A549 (cell line): ENCODE measurements at regions of chr2 and their contacts with region 1.

Region 1: DNA sequence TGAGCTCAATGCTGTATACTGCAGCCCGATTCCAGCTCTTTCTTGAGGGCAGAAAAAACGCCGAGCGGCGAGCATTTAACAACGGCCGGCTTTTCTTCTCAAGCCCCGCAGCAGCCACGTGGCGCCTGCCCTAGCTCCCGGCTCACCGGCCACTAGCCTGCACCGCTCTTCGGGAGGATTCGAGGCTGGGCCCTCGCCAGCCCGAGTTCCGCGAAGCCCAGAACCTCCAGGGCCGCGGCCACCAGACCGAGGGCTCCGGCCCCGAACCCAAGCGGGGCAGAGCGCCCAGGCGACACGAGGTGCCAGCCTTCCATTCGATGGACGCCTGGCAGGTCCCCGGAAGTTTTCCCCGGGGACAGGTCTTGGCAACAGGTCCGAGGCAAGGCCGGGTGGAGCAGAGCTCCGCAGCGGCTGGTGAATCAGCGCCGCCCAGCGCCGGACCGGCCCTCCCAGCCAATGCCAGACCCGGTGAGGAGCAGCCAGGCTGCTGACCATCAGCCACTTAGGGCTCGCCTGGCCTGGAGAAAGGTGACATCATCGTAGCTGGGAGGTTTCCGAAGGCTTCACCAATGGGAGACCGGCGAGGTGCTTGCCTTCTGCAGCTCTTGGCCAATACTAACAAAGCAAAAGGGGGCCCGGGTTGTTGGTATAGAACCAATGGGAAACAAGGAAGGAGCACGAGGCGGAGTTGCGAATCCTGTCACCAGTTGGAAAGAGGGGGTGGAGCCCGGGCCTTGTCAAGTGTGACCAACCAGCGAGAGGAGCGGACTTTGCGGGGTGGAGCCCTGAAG is 544 bp upstream of the MXD1 start:
- DNase-seq: peak; percentile 99 to 100
- ATAC-seq: peak; percentile 94 to 95
- H3K4me3 ChIP-seq: peak overlapping the region; percentile 57
- H3K27ac ChIP-seq: peak overlapping the region; percentile 86 to 95
- H3K4me1 ChIP-seq: peaks cover 17% of the 10 kb centered on the region; the same call in 2 of the 3 replicates
- CTCF ChIP-seq: peak; percentile 42
- EP300 ChIP-seq: no peak
- POLR2A ChIP-seq: peak; percentile 88
- RAD21 ChIP-seq: peak; percentile 50 to 71

Region 2: DNA sequence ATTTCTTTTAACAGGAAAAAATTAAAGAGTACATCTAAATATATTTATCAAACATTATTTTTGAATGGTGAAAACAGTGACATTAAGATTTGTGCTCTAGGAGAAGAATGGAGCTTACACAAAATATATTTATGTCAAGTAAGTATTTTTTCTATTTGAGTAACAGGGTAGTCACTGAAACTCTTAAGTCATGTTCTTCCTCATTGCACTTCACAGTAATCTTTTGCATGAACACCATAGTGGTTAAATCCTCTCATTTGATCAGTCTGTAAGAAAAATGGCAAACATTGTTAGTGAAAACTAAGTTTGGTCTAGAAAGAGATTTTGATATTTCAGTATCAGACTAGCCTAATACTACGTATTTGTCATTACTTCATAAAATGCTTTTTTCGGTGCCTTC is 76.8 kb before region 1 on chr2:
- CTCF ChIA-PET with region 1: no interaction called
- POLR2A ChIA-PET with region 1: no interaction called
- DNase-seq: no peak
- ATAC-seq: no peak
- H3K4me3 ChIP-seq: no peak overlapping the region
- H3K27ac ChIP-seq: no peak overlapping the region
- H3K4me1 ChIP-seq: no peaks in the 10 kb centered on the region
- CTCF ChIP-seq: no peak
- EP300 ChIP-seq: no peak
- POLR2A ChIP-seq: no peak
- RAD21 ChIP-seq: no peak

Region 3: DNA sequence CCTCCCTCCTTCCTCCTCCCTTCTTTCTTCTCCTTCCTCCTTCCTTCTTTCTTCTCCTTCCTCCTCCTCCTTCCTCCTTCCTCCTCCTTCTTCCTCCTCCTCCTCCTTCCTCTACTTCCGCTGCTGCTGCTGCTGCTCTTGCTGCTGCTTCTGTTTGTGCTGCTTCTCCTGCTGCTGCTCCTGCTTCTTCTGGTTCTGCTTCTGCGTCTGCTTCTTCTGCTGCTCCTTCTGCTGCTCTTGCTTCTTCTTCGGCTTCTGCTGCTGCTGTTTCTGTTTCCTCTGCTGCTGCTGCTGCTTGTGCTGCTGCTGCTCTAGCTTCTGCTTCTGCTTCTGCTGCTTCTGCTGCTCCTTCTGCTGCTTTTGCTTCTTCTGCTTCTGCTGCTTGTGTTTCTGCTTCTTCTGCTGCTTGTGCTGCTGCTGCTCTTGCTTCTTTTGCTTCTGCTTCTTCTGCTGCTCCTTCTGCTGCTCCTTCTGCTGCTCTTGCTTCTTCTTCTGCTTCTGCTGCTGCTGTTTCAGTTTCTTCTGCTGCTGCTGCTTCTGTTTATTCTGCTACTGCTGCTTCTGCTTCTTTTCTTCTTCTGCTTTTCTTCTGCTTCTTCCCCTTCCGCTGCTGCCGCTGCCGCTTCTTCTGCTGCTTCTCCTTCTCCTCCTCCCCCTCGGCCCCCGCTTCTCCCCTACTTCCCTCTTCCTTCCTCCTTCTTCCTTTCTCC is 12.0 kb before region 1 on chr2:
- CTCF ChIA-PET with region 1: interaction called, 10 read pairs
- POLR2A ChIA-PET with region 1: interaction called, 4 read pairs
- DNase-seq: no peak
- ATAC-seq: no peak
- H3K4me3 ChIP-seq: no peak overlapping the region
- H3K27ac ChIP-seq: no peak overlapping the region
- H3K4me1 ChIP-seq: no peaks in the 10 kb centered on the region
- CTCF ChIP-seq: no peak
- EP300 ChIP-seq: no peak
- POLR2A ChIP-seq: no peak
- RAD21 ChIP-seq: no peak

Region 4: GRCh38 chr2:70043252-70043875 is 129.0 kb after region 1 on chr2:
- CTCF ChIA-PET with region 1: interaction called, 14 read pairs
- POLR2A ChIA-PET with region 1: interaction called, 7 read pairs
- DNase-seq: no peak
- ATAC-seq: no peak
- H3K4me3 ChIP-seq: no peak overlapping the region
- H3K27ac ChIP-seq: no peak overlapping the region
- H3K4me1 ChIP-seq: no peaks in the 10 kb centered on the region
- CTCF ChIP-seq: no peak
- EP300 ChIP-seq: no peak
- POLR2A ChIP-seq: no peak
- RAD21 ChIP-seq: no peak

Region 5: GRCh38 chr2:70078384-70078783 is 164.0 kb after region 1 on chr2:
- CTCF ChIA-PET with region 1: interaction called, 161 read pairs
- POLR2A ChIA-PET with region 1: interaction called, 11 read pairs
- DNase-seq: no peak
- ATAC-seq: no peak
- H3K4me3 ChIP-seq: no peak overlapping the region
- H3K27ac ChIP-seq: no peak overlapping the region
- H3K4me1 ChIP-seq: peaks cover 4% of the 10 kb centered on the region
- CTCF ChIP-seq: no peak
- EP300 ChIP-seq: no peak
- POLR2A ChIP-seq: no peak
- RAD21 ChIP-seq: no peak

Region 6: DNA sequence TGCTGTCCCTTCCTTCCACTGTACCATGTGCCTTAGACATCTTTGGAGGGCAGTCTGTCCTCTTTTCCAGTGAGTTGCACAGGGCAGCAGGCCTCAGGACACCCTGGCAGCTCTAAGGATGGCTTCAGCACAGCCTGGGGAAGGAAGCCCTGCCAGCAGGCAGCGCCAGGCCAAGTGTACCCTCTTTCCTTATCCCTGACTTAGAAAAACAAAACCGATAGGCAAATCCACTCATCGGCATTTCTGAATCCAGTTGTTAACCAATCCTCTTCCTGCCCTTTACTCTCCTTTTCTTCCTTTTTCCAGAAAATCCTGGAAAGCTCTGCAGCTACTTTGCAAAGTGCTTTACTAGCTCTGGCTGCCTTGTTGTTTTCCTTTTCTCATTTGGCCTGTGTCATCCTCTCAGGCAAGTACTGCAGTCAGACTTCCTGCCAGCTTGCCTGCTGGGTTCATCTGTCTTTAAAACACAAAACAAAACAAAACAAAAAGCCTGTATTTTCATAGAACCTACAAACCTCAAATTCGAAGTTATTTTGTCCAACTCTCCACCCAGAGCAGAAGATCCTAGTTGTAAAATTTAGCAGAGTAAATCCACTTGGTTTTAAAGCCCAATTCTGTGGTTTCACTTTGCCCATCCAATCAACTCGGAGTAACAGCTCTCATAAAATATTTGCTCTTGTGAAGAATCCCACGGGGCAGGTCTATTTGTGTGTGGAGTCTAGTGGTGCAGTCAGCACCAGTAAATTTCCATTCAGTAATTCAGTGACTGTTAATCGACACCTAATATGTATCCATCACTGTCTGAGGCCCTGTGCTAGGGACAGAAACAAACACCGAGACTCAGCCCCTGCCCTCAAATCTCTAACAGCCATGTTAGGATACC is 218.1 kb after region 1 on chr2:
- CTCF ChIA-PET with region 1: interaction called, 12 read pairs
- POLR2A ChIA-PET with region 1: interaction called, 25 read pairs
- DNase-seq: peak; percentile 53 to 68
- ATAC-seq: peak; percentile 63 to 66
- H3K4me3 ChIP-seq: peak overlapping the region; percentile 20
- H3K27ac ChIP-seq: peak overlapping the region; percentile 90
- H3K4me1 ChIP-seq: peaks cover 51% of the 10 kb centered on the region
- CTCF ChIP-seq: no peak
- EP300 ChIP-seq: no peak
- POLR2A ChIP-seq: no peak
- RAD21 ChIP-seq: no peak

Region 7: DNA sequence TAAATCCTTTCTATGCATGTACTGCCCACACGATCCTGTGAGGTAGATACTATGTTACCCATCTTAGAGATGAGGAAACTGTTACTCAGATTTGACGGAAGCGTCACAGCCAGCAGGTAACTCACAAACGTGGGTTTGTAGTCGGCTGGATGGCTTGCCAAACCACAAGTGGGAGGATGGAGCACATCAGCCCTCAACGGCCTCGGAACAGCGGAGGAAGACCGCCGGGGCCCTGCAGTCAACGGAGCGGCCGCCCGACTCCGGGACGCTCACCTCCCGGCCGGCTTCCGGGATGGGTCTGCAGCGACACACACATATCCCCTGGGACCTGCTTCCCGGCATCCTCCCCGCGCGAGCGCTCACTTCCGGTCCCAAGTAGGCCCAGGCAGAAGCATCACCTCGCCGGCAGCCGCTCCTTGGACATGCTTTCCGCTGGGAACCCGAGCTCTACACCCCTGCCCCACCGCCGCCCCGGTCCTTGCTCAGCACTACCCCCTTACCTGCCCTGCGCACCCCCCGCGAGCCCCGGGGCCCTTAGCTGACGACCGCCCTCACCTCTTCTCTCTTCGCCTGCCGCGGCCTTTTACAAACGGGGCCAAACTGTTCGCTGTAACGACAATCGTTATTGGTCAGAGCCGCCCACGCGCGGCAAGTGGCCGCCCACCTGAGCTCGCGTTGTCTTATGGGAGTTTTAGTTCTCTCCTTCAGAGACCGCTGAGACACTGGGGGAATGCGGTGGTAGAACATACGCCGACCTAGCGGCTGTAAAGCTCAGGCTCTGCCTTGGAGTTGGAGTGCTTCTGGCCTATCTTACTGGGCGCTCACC is 276.3 kb after region 1 on chr2 and contains the start of gene C2orf42:
- CTCF ChIA-PET with region 1: interaction called, 5 read pairs
- POLR2A ChIA-PET with region 1: interaction called, 28 read pairs
- DNase-seq: peak; percentile 99 to 100
- ATAC-seq: peak; percentile 97 to 98
- H3K4me3 ChIP-seq: peak within 1 kb of the TSS; percentile 75
- H3K27ac ChIP-seq: peak within 1 kb of the TSS; percentile 92 to 97
- H3K4me1 ChIP-seq: peaks cover 14% of the 10 kb centered on the region
- CTCF ChIP-seq: no peak
- EP300 ChIP-seq: no peak
- POLR2A ChIP-seq: peak; percentile 99
- RAD21 ChIP-seq: peak in 1 of 2 experiments; percentile 20; a peak in 1 of 5 replicates
- polyA plus RNA-seq, gene C2orf42: 10.4 and 14.8 TPM in 2 replicates